PC-3 (cell line): ENCODE measurements at regions of chr6 and their contacts with region 1.

Region 1: DNA sequence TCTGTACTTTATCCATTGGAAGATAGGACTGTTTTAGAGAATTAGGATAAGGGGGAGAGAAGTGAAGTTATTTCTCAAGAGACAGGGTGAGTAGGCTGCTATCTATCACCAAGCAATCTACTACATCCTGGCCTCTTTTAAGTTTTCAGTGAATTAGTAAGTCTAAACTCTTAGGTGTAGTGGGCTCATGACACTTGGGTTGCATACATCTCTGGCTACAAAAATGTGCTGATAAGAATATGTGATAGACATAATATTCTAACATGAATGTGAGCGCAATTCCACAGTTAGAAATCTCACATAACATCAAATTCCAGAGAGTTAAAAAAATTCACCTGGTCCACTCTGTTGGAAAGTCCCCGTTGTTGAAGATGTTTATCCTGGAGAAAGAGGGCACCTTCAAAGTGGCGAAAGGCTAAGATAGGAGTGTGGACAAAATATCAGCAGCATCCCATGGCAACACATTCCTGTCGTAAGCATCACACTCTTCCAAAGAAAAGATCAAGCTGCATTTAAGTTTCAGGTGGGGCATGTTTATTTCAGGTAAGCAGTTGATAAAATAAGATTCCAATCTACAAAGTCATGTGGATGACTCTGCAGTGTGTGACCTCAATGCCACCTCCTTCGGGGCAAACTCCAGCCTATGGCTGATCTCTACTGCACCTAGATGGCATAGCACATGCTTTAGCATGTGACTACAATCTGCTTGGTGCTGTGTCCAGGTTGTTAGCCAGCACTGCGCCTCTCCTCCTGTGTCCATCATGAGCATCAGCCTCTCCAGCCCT is 111.7 kb upstream of the NEDD9 start:
- DNase-seq: peak; percentile 94
- ATAC-seq: peak; percentile 93
- H3K4me3 ChIP-seq: no peak overlapping the region
- H3K27ac ChIP-seq: peak overlapping the region; percentile 78
- H3K4me1 ChIP-seq: peaks cover 32% of the 10 kb centered on the region
- H3K27me3 ChIP-seq: no peaks in the 10 kb centered on the region
- CTCF ChIP-seq: no peak

Region 2: DNA sequence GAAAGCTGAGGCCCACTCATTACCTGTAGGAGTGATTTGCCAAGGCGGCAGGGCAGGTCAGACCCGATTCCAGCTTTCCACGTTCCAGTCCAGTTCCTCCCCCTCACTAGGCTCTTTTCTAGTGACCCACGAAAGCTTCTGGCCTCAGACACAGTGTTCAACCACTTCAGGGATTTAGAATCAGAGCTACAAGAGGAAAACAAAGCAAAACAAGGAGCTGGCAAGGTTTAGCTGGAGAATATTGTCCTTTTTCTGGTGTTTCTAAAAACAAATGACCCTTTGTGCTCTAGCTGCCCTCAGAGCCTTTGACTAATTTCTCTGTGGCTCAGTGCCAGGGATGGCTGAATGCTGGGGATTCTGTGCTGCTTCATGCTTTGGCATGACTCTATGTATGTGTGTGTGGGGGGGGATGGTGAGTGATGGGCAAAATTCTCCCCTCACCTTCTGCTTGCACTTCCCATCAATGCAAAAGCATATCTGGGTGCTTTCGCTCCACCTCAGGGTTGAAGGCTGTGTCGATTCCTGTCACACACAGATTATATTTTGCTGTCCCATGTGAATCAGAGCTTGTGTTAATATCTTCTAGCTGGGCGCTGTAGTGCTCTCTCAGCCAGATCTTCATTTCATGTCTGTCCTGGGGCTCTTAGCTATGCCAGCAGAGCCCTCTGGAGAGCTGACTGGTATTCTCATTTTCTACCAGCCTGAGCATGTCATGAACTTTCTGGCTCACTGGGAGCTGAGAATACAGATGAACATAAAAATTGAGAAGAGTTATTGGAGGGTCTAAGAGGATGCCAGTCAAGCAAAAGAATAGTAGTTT is 92.4 kb before region 1 on chr6:
- CTCF ChIA-PET with region 1: no interaction called
- POLR2A ChIA-PET with region 1: no interaction called
- intact Hi-C with region 1: loop called (anchors 1 kb)
- DNase-seq: peak; percentile 86
- ATAC-seq: peak; percentile 63
- H3K4me3 ChIP-seq: no peak overlapping the region
- H3K27ac ChIP-seq: peak overlapping the region; percentile 74
- H3K4me1 ChIP-seq: peaks cover 39% of the 10 kb centered on the region
- H3K27me3 ChIP-seq: no peaks in the 10 kb centered on the region
- CTCF ChIP-seq: no peak

Region 3: GRCh38 chr6:11373208-11373607 is 29.1 kb after region 1 on chr6:
- CTCF ChIA-PET with region 1: no interaction called
- POLR2A ChIA-PET with region 1: interaction called, 20 read pairs
- intact Hi-C with region 1: no loop called
- DNase-seq: no peak
- ATAC-seq: no peak
- H3K4me3 ChIP-seq: no peak overlapping the region
- H3K27ac ChIP-seq: no peak overlapping the region
- H3K4me1 ChIP-seq: peaks cover 9% of the 10 kb centered on the region
- H3K27me3 ChIP-seq: no peaks in the 10 kb centered on the region
- CTCF ChIP-seq: no peak

Region 4: DNA sequence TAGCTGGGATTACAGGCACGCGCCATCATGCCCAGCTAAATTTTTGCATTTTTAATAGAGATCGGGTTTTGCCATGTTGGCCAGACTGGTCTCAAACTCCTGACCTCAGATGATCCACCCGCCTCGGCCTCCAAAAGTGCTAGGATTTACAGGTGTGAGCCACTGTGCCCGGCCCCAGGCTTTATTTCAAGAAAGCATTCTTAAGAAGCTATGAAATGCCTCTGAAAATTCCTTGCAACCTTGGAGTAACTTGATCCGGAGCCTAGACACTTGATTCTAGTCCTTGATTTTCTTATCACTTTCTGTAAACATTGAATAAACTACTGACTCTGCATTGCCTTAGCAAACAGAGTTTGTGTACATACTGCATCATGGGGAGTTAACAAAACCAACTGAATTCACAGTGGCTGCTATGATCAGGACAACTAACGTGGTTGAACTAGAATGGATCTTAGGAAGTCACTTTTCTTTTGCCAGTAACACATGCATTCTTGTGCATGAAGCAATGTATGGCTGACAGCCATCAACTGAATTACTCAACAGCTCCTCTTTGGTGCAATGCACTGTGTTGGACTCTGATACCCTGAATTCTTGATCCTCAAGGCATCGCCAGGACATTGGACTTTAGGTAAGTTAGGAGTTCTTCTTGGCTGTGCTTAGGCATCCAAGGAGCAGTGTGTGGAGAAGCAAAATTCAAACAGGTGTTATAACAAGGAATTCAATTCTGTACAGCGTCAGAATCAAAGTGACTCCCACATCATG is 90.6 kb after region 1 on chr6:
- CTCF ChIA-PET with region 1: no interaction called
- POLR2A ChIA-PET with region 1: no interaction called
- intact Hi-C with region 1: loop called (anchors 5 kb)
- DNase-seq: peak; percentile 97
- ATAC-seq: peak; percentile 85
- H3K4me3 ChIP-seq: no peak overlapping the region
- H3K27ac ChIP-seq: peak overlapping the region; percentile 98
- H3K4me1 ChIP-seq: peaks cover 53% of the 10 kb centered on the region
- H3K27me3 ChIP-seq: no peaks in the 10 kb centered on the region
- CTCF ChIP-seq: no peak

Region 5: DNA sequence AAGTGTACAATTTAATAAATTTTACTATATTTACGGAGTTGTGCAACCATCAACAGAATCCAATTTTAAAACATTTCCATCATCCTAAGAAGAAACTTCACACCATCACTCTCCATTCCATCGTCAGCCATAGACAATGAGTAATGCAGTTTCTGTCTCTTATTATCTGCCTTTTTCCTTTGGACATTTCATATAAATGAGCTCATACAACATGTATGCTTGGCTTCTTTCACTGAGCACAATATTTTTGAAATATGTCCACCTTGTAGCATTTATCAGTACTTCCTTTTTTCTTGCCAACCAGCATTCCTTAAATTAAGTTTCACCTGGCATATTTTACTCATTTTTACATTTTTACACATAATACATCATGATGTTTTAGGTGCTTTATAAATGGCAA is 645.2 kb after region 1 on chr6:
- CTCF ChIA-PET with region 1: no interaction called
- POLR2A ChIA-PET with region 1: no interaction called
- intact Hi-C with region 1: no loop called
- DNase-seq: no peak
- ATAC-seq: no peak
- H3K4me3 ChIP-seq: no peak overlapping the region
- H3K27ac ChIP-seq: no peak overlapping the region
- H3K4me1 ChIP-seq: peaks cover 5% of the 10 kb centered on the region; the same call in 1 of the 2 replicates
- H3K27me3 ChIP-seq: no peaks in the 10 kb centered on the region
- CTCF ChIP-seq: no peak